ENCODE measurements at regions of chr16 and their contacts with region 1.

Region 1: DNA sequence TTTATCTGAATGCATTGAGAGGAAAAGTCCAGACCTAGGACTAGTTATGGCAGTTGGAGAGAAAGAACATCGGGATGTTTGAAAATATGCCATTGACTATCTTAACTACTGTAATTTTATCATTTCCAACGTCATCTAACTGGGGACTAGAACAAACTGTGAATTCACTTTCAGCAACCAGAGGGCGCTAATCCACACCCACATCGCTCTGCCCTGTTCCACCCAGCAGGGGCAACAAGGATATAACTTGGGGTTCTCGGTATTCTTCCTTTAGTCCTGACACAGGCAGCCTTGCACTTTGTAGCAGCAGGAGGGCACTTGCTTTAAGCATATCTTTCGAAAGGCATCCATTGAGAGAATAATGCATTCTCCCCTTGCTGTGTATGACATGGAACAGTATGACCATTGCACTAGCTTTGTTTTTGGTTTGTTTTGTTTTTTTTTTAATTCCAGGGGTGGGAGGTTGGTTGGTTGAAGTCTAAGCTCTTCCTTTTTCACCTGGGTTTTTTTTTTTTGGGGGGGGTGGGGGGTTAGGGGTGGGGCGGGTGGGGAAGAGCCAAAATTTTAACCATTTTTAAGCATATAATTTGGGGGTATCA is 31.5 kb downstream of the SIAH1 start:
- DNase-seq: peak; percentile 78
- CTCF ChIP-seq: peak; percentile 68

Region 2: DNA sequence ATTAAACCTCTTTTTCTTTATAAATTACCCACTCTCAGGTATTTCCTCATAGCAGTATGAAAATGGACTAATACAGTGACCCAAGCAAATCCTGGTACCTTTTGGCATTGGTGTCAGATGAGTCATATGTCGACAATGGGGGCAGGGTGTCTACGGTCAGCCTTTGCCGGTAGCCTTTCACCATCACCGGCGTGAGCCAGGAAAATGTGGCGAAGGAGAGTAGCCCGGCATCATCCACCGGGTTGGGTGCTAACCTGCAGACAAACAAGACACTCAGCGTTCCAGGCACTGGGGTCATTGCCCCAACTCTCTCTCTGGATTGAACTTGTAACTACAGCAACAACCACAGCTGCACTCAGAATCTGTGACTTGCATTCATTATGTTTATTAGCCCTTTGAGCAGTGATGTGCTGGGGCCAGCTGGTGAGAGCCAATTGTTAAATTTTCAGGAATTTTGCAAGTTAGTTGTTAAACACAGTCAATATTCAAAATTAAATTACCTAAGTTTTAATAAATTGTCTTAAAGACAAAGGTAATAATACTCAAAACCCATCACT is 209.8 kb before region 1 on chr16:
- CTCF ChIA-PET with region 1: no interaction called
- POLR2A ChIA-PET with region 1: no interaction called
- DNase-seq: no peak
- CTCF ChIP-seq: no peak

Region 3: DNA sequence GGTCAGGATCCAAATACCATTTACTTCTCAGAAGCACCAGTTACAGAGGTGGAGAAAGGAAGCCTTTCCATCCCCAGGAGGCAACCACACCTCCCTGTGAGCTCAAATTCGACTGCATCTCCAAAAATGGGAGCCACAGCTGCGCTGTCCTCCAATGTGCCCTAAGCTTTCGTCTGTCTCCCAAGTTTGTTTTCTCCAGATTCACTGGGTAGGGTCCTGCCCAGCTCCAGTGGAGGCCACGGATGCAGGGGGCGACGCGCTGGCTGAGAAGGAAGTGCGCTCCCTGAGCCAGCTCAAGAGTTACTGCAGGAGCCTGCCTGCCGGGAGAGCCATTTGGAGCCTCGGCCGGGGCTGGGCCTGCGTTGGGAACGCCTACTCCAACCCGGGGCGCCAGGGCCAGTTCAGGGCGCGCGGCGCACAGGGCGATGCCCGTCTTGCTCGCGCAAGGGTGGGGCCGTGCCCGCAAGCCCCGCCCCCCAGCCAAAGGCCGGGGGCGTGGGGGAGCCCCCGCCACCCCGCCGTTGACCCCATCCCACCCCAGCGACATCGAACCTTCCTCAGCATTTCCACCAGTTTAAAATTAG is 12.0 kb after region 1 on chr16:
- CTCF ChIA-PET with region 1: interaction called, 20 read pairs
- POLR2A ChIA-PET with region 1: interaction called, 7 read pairs
- DNase-seq: peak; percentile 86
- CTCF ChIP-seq: no peak

Region 4: DNA sequence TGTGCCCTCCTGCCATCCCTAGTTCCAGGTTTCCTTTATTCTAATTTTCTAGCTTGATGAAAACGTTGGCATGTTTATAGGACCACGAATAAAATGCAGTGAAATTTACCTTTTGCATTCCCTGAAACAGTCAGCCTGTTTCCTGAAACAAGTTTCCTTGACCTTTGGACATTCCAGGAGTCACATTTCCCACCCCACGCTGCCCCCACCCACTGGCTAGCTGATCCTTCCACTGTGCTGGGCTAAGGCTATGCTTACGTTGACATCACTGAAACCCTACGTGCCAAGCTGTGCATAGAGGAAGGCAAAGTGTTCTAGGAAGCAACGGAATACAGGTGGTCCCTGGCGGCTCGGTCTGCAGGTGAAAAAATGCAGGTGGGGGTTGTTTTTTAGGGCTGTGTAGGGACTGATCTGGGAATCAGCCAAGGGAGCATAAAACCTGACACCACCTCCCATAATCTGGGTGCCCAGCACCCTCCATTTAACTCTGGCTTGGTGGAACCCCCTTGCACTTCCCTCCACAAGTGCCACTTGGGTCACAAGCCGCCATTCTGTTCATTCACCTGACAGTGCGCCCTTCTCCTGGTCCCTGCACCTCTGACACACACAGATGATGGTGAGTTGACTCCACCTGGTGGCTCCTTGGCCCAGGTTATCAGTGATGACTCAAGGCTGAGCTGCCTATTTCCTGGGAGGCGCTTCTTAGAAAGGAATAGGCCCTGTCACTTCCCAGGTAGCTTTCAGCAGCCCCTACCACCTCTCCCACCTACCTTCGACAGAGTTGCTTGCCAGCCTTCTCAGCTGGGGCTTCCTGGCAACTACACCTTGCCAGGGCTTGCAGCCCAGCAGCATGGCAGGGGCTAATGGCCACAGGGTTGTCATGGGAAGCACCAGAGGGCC is 172.6 kb after region 1 on chr16:
- CTCF ChIA-PET with region 1: interaction called, 15 read pairs
- POLR2A ChIA-PET with region 1: no interaction called
- DNase-seq: peak; percentile 73
- CTCF ChIP-seq: peak; percentile 62

Region 5: DNA sequence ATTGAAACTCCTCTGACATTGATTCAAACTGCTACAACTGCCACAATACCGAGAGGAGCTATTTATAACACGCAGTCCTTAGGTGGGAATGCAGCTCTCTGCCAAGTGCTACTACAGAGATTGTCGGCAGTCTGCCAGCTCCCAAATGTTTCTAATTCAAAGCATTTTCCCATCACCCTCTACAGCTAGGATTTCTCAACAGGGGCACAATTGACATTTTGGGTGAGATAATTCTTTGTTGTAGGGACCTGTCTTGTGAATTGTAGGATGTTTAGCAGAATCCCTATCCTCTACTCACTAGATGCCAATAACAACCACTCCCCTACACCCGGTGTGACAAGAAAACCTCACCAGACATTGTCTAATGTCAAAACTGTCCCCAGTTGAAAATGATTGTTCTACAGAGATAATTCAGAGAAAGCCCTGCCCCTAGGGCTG is 264.1 kb after region 1 on chr16:
- CTCF ChIA-PET with region 1: interaction called, 95 read pairs
- POLR2A ChIA-PET with region 1: interaction called, 10 read pairs
- DNase-seq: no peak
- CTCF ChIP-seq: no peak

Measured in GM10248 (cell line).